ENCODE measurements at regions of chr4 and their contacts with region 1.

Region 1: DNA sequence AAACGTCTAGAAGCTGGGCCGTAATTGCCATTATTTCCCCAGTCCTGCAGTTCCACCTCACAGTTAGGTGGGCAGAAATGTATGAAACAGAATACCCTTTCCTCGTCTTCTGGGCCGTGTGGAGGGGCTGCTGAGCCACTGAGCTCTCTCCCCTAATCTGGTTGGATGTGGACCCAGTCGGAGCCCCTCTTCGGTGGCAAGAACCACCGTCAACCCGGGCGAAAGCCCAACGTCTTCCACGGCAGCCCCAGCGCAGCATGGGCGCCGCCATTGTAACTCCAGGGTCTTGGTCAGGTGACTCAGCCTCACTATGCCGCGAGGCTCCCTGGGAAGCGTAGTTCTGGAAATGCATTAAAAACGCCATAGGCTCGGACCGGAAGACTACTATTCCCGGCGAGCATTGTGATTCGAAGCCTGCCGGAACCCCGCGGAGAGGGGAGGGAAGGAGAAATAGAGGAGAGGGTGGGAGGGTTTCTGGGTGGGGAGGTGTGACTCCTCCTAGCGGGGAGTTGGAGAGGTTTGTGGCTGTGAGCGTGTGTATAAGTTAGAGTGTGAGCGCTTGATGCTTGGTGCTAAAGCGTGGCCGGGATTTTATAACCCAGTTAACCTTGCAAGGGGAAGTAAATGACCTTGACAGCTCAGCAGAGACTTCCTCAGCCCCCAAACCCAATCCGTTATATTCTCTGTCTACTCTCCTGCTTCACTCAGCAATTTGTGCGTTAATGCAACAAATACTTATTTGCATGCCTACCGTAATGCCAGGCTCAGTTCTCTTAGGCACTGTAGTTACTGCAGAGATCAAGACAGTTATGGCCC is at the start of gene GATB:
- DNase-seq: peak; percentile 96
- ATAC-seq: peak; percentile 99
- H3K4me3 Mint-ChIP-seq: peak within 1 kb of the TSS; percentile 94
- H3K27ac Mint-ChIP-seq: peak within 1 kb of the TSS; percentile 95
- H3K4me1 Mint-ChIP-seq: peaks cover 20% of the 10 kb centered on the region
- H3K27me3 Mint-ChIP-seq: no peaks in the 10 kb centered on the region
- CTCF ChIP-seq: peak; percentile 33
- total RNA-seq, gene GATB: 19.1 to 22.3 TPM

Region 2: GRCh38 chr4:151921811-151922210 is 160.9 kb after region 1 on chr4:
- CTCF ChIA-PET with region 1: no interaction called
- POLR2A ChIA-PET with region 1: no interaction called
- intact Hi-C with region 1: loop called (anchors 10 kb)
- DNase-seq: no peak
- ATAC-seq: no peak
- H3K4me3 Mint-ChIP-seq: no peak overlapping the region
- H3K27ac Mint-ChIP-seq: no peak overlapping the region
- H3K4me1 Mint-ChIP-seq: peaks cover 8% of the 10 kb centered on the region
- H3K27me3 Mint-ChIP-seq: no peaks in the 10 kb centered on the region
- CTCF ChIP-seq: no peak

Region 3: GRCh38 chr4:152255437-152256011 is 494.6 kb after region 1 on chr4:
- CTCF ChIA-PET with region 1: no interaction called
- POLR2A ChIA-PET with region 1: no interaction called
- intact Hi-C with region 1: loop called (anchors 5 kb)
- DNase-seq: peak; percentile 84
- ATAC-seq: peak; percentile 99
- H3K4me3 Mint-ChIP-seq: no peak overlapping the region
- H3K27ac Mint-ChIP-seq: no peak overlapping the region
- H3K4me1 Mint-ChIP-seq: peaks cover 19% of the 10 kb centered on the region
- H3K27me3 Mint-ChIP-seq: no peaks in the 10 kb centered on the region
- CTCF ChIP-seq: no peak

Measured in activated CD8-positive, alpha-beta T cell treated with anti-CD3 and anti-CD28 coated beads for 36 hours (primary cell).